Activated B cell treated with CpG ODN at 0.5 μM for 24 hours (primary cell): ENCODE measurements at regions of chr14 and their contacts with region 1.

Region 1: DNA sequence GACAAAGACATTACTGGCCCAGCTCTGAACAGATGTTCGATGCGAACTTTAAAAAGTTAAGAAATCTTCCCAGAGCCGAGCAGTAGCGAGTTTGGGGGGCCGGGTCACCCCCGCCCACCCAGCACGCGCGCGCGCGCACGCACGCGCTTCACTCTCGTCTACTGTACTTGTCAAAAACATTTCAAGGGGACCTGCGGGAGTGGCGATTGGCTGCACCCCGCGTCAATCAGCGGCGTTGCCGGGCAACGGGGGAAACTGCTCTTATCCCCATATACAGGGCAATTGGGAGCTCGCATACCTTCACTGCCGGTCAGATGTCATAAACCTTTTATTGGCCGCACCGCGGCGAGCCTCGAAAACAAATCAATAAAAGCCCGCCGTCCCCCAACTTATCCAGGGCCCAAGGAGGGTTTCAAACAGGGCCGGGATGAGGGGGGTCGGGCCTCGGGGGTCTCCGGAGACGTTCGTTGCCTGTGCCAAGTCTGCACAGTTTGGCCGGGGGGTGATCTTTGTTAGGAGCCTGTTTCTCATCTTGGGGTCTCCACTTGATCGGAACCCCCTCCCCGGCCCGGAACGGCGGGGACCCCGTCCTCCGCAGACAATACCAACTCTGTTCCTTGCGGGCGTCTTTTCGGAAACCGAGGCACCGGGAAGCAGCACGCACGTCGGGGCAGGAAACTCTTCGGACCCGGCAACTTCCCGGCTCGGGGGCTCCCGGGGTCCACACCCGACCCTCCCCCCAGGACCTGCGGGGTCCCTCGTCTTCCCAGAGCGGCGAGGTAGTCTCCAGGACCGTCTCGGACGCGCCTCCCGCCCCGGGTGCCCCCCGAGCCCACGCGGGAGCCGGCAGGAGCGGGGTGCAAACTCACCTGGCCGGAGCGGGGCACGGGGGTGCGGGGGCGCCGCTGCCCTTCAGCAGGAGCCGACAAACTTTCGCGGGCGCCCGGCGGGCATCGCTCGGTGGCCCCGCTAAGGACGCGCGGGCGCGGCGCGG is 734 bp downstream of the FOXN3 start:
- DNase-seq: peak; percentile 100
- ATAC-seq: peak; percentile 64
- H3K4me3 Mint-ChIP-seq: peak overlapping the region; percentile 92
- H3K27ac Mint-ChIP-seq: peak overlapping the region; percentile 95
- H3K4me1 Mint-ChIP-seq: peaks cover 48% of the 10 kb centered on the region
- H3K27me3 Mint-ChIP-seq: no peaks in the 10 kb centered on the region
- CTCF ChIP-seq: no peak

Region 2: DNA sequence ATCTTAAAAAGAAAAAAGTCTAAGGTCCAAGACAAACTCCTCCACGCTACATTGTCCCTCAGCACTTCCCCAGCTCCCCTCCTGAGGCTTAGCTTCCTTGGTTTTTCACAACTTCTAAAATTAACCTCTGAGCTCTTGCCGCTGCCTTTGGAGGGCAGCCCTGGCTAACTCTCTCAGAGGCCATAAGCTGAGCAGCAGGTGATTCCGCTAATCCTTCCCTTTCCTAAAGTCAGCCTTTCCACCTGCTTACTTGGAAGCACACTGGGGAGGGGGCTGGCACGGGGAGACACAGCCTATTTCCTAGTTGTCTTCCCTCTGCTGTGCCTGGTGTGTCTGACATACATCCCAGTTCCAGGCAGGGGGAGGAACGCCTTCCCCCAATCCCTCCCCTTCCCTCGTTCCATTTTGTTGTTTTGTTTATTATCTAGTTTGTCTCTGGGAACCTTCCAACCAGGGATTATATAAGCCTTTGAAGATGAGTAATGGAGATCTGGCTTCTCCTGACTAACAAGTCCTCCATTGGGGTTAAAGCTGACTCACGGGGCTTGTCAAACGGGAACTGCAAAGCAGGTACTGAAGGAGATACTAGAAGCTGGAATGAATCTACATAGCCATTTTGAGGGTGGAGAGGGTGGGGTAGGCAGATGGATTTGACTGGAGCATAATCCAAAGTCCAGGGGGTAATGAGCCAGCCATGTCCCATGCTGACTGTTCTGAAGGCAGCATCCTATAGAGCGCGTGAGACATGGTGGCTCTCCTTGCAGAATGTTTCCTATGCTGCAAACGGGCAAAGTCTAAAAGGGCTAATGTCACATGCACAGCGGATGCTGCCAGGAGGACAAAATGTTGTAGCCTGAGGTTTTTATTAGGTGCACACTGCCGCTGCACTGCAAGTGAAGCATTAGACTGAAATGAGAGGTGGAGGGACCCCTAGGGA is 230.1 kb before region 1 on chr14:
- CTCF ChIA-PET with region 1: interaction called, 4 read pairs
- POLR2A ChIA-PET with region 1: interaction called, 7 read pairs
- intact Hi-C with region 1: loop called (anchors 2 kb)
- DNase-seq: no peak
- ATAC-seq: no peak
- H3K4me3 Mint-ChIP-seq: peak overlapping the region; percentile 69
- H3K27ac Mint-ChIP-seq: peak overlapping the region; percentile 91
- H3K4me1 Mint-ChIP-seq: peaks cover 41% of the 10 kb centered on the region
- H3K27me3 Mint-ChIP-seq: no peaks in the 10 kb centered on the region
- CTCF ChIP-seq: no peak

Region 3: GRCh38 chr14:89336338-89336737 is 80.0 kb before region 1 on chr14:
- CTCF ChIA-PET with region 1: interaction called, 9 read pairs
- POLR2A ChIA-PET with region 1: interaction called, 11 read pairs
- intact Hi-C with region 1: loop called (anchors 1 kb)
- DNase-seq: no peak
- ATAC-seq: peak; percentile 69
- H3K4me3 Mint-ChIP-seq: no peak overlapping the region
- H3K27ac Mint-ChIP-seq: peak overlapping the region; percentile 66
- H3K4me1 Mint-ChIP-seq: peaks cover 71% of the 10 kb centered on the region
- H3K27me3 Mint-ChIP-seq: no peaks in the 10 kb centered on the region
- CTCF ChIP-seq: no peak

Region 4: GRCh38 chr14:89430391-89431236 is 14.3 kb after region 1 on chr14:
- CTCF ChIA-PET with region 1: interaction called, 4 read pairs
- POLR2A ChIA-PET with region 1: interaction called, 20 read pairs
- intact Hi-C with region 1: loop called (anchors 1 kb)
- DNase-seq: no peak
- ATAC-seq: peak; percentile 93
- H3K4me3 Mint-ChIP-seq: peak overlapping the region; percentile 80
- H3K27ac Mint-ChIP-seq: peak overlapping the region; percentile 86
- H3K4me1 Mint-ChIP-seq: peaks cover 83% of the 10 kb centered on the region
- H3K27me3 Mint-ChIP-seq: no peaks in the 10 kb centered on the region
- CTCF ChIP-seq: no peak

Region 5: GRCh38 chr14:89509891-89510290 is 93.6 kb after region 1 on chr14:
- CTCF ChIA-PET with region 1: interaction called, 3 read pairs
- POLR2A ChIA-PET with region 1: interaction called, 5 read pairs
- intact Hi-C with region 1: loop called (anchors 2 kb)
- DNase-seq: no peak
- ATAC-seq: no peak
- H3K4me3 Mint-ChIP-seq: peak overlapping the region; percentile 81
- H3K27ac Mint-ChIP-seq: peak overlapping the region; percentile 93
- H3K4me1 Mint-ChIP-seq: peaks cover 42% of the 10 kb centered on the region
- H3K27me3 Mint-ChIP-seq: no peaks in the 10 kb centered on the region
- CTCF ChIP-seq: no peak

Region 6: DNA sequence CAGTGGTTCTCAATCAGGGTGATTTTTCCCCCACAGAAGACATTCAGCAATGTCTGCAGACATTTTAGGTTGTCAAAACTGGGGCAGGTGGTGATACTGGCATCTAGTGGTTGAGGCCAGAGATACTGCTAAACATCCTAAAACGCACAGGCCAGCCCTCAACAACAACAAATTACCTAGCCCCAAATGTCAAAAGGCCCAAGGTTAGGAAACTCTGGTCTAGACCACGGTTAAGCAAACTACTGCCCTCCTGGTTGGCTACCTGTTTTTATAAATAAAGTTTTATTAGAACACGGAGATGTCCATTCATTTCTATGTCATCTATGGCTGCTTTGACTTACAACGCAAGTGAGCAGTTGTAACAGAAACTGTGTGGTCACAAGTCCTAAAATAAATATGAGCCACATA is 351.6 kb after region 1 on chr14:
- CTCF ChIA-PET with region 1: interaction called, 6 read pairs
- POLR2A ChIA-PET with region 1: no interaction called
- intact Hi-C with region 1: loop called (anchors 1 kb)
- DNase-seq: peak; percentile 28
- ATAC-seq: peak; percentile 92
- H3K4me3 Mint-ChIP-seq: no peak overlapping the region
- H3K27ac Mint-ChIP-seq: peak overlapping the region; percentile 67
- H3K4me1 Mint-ChIP-seq: peaks cover 31% of the 10 kb centered on the region
- H3K27me3 Mint-ChIP-seq: no peaks in the 10 kb centered on the region
- CTCF ChIP-seq: peak; percentile 20